AG04449 (cell line): ENCODE measurements at regions of chr10 and their contacts with region 1.

Region 1: GRCh38 chr10:86899670-86900276 is 57.6 kb downstream of the MMRN2 start:
- DNase-seq: peak; percentile 10
- H3K4me3 ChIP-seq: no peak overlapping the region
- CTCF ChIP-seq: peak; percentile 65

Region 2: GRCh38 chr10:86688398-86688921 is 211.3 kb before region 1 on chr10:
- CTCF ChIA-PET with region 1: interaction called, 86 read pairs
- POLR2A ChIA-PET with region 1: no interaction called
- DNase-seq: no peak
- H3K4me3 ChIP-seq: no peak overlapping the region; the same call in 1 of the 2 replicates
- CTCF ChIP-seq: peak; percentile 78

Region 3: DNA sequence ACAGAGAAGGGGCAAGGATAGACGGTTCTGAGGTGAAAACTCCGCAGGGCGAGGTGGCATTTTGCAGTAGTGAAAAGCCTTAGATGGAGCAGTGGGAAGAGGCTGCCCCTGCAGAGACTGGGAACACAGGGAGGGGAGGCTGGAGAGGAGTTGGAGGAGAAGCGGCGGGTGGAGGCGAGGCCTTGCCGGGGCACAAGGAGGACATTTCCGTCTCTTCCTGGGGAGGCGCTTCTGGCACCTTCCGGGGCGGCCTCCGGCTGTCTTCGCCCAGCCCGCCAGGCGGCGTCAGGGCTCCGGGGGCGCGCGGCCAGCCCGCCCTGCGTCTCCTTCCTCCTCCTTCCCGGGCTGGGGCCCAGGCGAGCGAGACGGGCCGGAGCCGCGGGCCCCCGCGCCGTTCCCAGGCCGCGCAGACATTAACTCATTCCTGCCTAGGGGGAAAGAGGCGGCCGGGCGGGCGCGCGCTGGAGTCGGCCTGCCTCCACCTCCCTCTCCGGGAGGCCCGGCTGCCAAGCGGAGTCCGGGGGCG is 188.7 kb before region 1 on chr10:
- CTCF ChIA-PET with region 1: interaction called, 68 read pairs
- POLR2A ChIA-PET with region 1: no interaction called
- DNase-seq: peak; percentile 10
- H3K4me3 ChIP-seq: peak overlapping the region; percentile 57
- CTCF ChIP-seq: peak; percentile 82

Region 4: DNA sequence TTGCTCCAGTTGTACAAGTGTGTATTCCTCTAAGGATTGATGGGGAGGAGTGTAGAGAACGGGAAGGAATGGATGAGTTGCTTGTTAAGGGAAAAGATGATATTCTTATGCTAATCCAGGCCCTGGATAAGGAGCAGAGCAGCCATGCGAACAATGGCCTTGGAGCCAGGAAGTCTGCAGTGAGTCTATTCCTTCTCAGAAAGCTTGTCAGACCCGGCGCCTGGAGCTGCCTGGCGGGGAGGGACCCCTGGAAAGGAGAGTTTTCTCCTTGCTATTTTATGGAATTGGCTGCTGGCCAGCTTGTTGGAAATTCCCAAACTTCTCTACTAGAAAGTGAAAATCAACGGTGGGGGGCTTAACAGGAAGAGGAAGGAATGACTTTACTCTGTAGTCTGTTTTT is 31.4 kb before region 1 on chr10:
- CTCF ChIA-PET with region 1: interaction called, 10 read pairs
- POLR2A ChIA-PET with region 1: no interaction called
- DNase-seq: no peak
- H3K4me3 ChIP-seq: no peak overlapping the region
- CTCF ChIP-seq: no peak

Region 5: GRCh38 chr10:86888585-86889381 is 11.0 kb before region 1 on chr10:
- CTCF ChIA-PET with region 1: interaction called, 34 read pairs
- POLR2A ChIA-PET with region 1: no interaction called
- DNase-seq: peak; percentile 3
- H3K4me3 ChIP-seq: no peak overlapping the region
- CTCF ChIP-seq: no peak